Dendritic cell treated with granulocyte-macrophage colony-stimulating factor and Interleukin-4, amounts not matched to agents 40 ng/mL and 50 ng/mL, for 4 days (primary cell): ENCODE measurements at regions of chr16 and their contacts with region 1.

Region 1: GRCh38 chr16:67198238-67198734 is 645 bp upstream of the ELMO3 start:
- H3K4me3 Mint-ChIP-seq: no peak overlapping the region
- H3K27ac Mint-ChIP-seq: peak overlapping the region; percentile 70
- H3K4me1 Mint-ChIP-seq: peaks cover 57% of the 10 kb centered on the region
- H3K27me3 Mint-ChIP-seq: no peaks in the 10 kb centered on the region

Region 2: GRCh38 chr16:67246934-67247697 is 48.8 kb after region 1 on chr16 and contains the start of gene FHOD1:
- intact Hi-C with region 1: loop called (anchors 5 kb)
- H3K4me3 Mint-ChIP-seq: peak within 1 kb of the TSS; percentile 89
- H3K27ac Mint-ChIP-seq: peak within 1 kb of the TSS; percentile 88
- H3K4me1 Mint-ChIP-seq: peaks cover 63% of the 10 kb centered on the region
- H3K27me3 Mint-ChIP-seq: peaks cover 38% of the 10 kb centered on the region